ENCODE measurements at regions of chr16 and their contacts with region 1.

Region 1: GRCh38 chr16:8878521-8878911 is 3.6 kb upstream of the LITAFD start:
- DNase-seq: no peak
- H3K4me3 ChIP-seq: no peak overlapping the region
- H3K27ac ChIP-seq: no peak overlapping the region
- H3K4me1 ChIP-seq: peaks cover 1% of the 10 kb centered on the region
- H3K27me3 ChIP-seq: no peaks in the 10 kb centered on the region
- CTCF ChIP-seq: no peak
- EP300 ChIP-seq: no peak
- POLR2A ChIP-seq: no peak

Region 2: DNA sequence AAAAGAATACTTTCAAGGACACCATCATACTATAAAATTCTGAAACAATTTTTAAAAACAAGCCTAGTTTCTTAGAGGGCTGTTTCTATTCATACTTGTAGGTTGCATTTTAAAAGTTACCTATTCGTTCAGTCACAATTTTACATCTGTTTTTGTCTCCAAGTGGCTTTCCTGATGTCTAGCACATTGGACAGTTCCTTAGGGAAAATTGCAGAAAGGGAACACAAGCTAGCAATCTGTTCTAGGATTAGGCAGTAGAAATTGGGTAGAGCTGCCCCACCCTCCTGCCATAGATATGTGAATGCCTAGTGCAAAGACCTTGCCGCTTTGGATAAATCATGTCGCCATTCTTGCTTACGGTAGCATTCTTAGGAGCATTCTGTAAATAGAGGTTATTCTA is 1187.0 kb before region 1 on chr16:
- intact Hi-C with region 1: no loop called
- DNase-seq: no peak
- H3K4me3 ChIP-seq: no peak overlapping the region
- H3K27ac ChIP-seq: no peak overlapping the region
- H3K4me1 ChIP-seq: no peaks in the 10 kb centered on the region
- H3K27me3 ChIP-seq: no peaks in the 10 kb centered on the region
- CTCF ChIP-seq: no peak
- EP300 ChIP-seq: no peak
- POLR2A ChIP-seq: no peak

Region 3: GRCh38 chr16:8567750-8568617 is 310.5 kb before region 1 on chr16:
- intact Hi-C with region 1: loop called (anchors 1 to 10 kb)
- DNase-seq: peak; percentile 47 to 79 (median 75)
- H3K4me3 ChIP-seq: no peak overlapping the region
- H3K27ac ChIP-seq: no peak overlapping the region
- H3K4me1 ChIP-seq: no peaks in the 10 kb centered on the region
- H3K27me3 ChIP-seq: no peaks in the 10 kb centered on the region
- CTCF ChIP-seq: peak; percentile 82 to 94 (median 91)
- EP300 ChIP-seq: no peak
- POLR2A ChIP-seq: no peak

Region 4: DNA sequence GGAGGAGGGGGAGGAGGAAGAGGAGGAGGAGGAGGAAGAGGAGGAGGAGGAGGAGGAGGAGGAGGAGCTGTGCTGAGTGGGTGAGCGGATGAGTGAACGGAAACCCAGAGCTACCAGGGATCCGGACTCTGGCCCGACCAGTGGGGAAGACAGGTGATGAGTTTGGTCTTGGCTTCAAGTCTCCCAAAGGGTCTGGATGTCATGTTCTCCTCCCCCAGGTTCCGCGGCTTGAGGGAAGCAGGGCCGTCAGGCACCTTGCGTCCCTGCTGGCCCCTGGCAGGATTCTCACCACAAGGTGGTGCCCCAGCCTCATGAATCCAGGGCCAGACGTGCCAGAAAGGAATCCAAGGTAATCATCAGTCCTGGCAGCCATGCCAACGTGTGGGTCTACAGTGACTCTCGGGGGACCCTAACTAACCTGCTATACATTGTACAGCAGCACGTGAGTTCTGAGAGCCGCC is 217.6 kb before region 1 on chr16:
- intact Hi-C with region 1: loop called in 3 of 4 experiments (anchors 2 to 5 kb)
- DNase-seq: peak; percentile 32 to 78 (median 62)
- H3K4me3 ChIP-seq: no peak overlapping the region
- H3K27ac ChIP-seq: no peak overlapping the region
- H3K4me1 ChIP-seq: no peaks in the 10 kb centered on the region
- H3K27me3 ChIP-seq: no peaks in the 10 kb centered on the region
- CTCF ChIP-seq: peak; percentile 31 to 53 (median 48)
- EP300 ChIP-seq: no peak
- POLR2A ChIP-seq: no peak